ENCODE measurements at regions of chr22 and their contacts with region 1.

Region 1: DNA sequence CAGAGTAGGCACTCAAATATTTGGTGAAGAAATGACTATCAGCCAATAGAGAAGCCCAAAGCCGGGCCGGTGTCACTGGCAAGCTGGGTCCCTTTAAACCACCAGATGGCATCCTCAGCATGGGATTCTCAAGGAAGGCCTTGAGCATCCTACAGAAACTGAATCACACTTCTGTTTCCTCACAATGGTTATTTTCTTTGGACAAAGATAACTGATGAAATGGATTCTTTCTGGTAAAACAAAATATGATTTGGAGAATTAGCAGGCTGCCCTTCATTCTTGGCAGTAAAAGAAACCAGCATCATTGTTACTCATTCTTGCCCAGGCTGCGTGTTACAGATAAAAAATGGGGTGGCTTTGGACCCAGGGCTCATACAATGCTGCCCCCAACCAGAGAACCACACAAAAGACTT is 30.3 kb upstream of the ASPHD2 start:
- DNase-seq: peak; percentile 33 to 94 (median 67)

Region 2: GRCh38 chr22:26461188-26461810 is 62.6 kb after region 1 on chr22:
- intact Hi-C with region 1: loop called (anchors 1 kb)
- DNase-seq: peak in 6 of 10 donors; percentile 58 to 92 (median 67)

Measured in posterior cingulate gyrus (tissue), 11 donors.